Left cardiac atrium (tissue), 4 donors: ENCODE measurements at regions of chr16 and their contacts with region 1.

Region 1: GRCh38 chr16:66872943-66873684 is 7.2 kb upstream of the PDP2 start:
- DNase-seq: peak; percentile 94
- ATAC-seq: peak; percentile 95 to 97

Region 2: DNA sequence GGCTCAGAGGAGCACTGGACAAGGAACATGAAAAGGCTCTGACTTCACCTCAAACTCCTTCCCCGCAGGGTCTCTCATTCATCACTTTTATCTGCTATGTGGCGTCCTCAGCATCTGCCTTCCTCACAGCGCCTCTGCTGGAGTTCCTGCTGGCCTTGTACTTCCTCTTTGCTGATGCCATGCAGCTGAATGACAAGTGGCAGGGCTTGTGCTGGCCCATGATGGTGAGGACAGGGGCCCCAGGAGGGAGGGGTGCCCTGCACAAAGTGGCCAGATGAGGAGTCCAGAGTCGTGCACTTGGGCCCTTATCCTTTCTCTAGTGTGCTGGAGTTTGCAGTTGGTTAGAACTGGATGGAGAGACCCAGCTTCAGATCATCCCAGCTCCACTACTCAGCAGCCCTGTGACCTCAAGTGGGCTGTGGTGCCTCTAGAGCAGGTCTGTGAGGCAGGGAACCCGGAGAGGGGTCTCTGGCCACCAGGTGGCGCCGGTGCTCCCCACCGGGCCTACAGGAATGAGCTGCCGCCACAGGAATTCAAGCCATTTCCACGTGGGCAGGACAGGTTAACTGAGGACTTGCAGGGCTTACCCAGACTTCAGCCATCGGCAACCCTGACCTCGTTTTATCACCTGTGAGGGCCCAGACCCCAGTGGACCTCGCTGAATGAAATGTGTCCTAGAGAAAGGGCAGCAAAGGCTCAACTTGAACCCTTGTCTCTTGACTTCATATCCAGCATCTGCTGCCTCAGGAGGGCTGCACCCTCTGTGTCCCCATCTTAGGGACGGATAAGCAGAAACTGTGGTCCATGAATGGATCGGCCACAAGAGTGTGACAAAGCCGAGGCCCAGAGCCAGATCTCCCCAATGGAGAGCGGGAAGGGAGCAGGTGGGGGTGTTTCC is 264.6 kb before region 1 on chr16:
- intact Hi-C with region 1: loop called in 1 of 2 experiments (anchors 5 kb)
- DNase-seq: peak; percentile 90
- ATAC-seq: peak; percentile 35 to 39

Region 3: GRCh38 chr16:66660422-66661209 is 212.5 kb before region 1 on chr16:
- intact Hi-C with region 1: loop called in 1 of 2 experiments (anchors 5 kb)
- DNase-seq: peak; percentile 74
- ATAC-seq: peak; percentile 97 to 98

Region 4: GRCh38 chr16:66728117-66728787 is 144.9 kb before region 1 on chr16:
- intact Hi-C with region 1: loop called (anchors 5 kb)
- DNase-seq: no peak
- ATAC-seq: peak; percentile 82 to 84

Region 5: DNA sequence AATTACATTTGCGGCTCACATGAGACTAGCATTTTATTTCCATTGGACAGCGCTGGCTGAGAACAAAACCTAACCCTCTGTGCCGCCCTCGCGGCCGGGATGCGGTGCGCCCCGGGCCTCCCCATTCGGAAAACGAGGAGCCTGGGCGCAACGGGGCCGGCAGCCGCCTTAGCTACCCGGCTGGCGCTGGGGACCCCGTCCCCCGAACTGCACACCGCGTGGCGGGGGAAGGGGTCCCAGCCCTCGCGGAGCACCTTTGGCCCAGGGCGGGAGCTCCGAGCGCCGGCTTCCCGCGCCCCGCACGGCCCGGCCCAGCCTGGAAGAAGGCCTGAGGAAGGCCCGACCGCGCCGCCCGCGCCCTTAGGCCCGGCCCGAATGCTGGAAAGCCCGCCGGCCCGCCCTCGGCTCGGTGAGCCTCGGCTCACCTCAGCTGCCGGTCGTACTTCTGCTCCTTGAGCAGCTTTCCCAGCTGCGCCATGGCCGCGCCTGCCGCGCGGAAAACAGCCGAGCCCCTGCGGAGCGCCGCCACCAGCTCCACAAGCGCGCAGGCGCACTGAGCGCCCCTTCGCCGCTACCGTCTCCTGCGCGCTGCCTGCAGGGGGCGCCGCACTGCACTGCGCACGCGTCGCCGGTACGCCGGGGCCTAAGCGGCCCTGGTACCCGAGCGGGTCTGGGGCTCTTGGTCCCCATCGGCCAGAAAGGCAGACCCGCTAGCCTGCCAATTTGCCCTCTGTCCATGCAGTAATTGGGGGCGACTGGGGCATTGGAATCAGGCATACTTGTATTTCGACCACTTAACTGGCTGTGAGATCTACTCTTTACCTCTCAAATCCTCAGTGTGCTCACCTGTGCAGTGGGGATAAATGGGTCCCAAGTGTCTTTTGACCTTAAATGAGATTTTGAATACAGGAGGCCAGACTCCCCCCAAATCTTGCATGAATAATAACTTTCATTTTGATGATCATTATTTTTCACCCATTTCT is 42.4 kb before region 1 on chr16 and contains the start of gene NAE1:
- intact Hi-C with region 1: loop called (anchors 2 to 5 kb)
- DNase-seq: peak; percentile 91
- ATAC-seq: peak; percentile 98 to 99
- total RNA-seq, gene NAE1: 32.6 to 35.4 TPM